RWPE1 (cell line): ENCODE measurements at regions of chr11 and their contacts with region 1.

Region 1: GRCh38 chr11:2420502-2421225 is 20.1 kb downstream of the TSSC4 start:
- DNase-seq: peak; percentile 72
- H3K27ac ChIP-seq: no peak overlapping the region
- CTCF ChIP-seq: peak; percentile 89

Region 2: DNA sequence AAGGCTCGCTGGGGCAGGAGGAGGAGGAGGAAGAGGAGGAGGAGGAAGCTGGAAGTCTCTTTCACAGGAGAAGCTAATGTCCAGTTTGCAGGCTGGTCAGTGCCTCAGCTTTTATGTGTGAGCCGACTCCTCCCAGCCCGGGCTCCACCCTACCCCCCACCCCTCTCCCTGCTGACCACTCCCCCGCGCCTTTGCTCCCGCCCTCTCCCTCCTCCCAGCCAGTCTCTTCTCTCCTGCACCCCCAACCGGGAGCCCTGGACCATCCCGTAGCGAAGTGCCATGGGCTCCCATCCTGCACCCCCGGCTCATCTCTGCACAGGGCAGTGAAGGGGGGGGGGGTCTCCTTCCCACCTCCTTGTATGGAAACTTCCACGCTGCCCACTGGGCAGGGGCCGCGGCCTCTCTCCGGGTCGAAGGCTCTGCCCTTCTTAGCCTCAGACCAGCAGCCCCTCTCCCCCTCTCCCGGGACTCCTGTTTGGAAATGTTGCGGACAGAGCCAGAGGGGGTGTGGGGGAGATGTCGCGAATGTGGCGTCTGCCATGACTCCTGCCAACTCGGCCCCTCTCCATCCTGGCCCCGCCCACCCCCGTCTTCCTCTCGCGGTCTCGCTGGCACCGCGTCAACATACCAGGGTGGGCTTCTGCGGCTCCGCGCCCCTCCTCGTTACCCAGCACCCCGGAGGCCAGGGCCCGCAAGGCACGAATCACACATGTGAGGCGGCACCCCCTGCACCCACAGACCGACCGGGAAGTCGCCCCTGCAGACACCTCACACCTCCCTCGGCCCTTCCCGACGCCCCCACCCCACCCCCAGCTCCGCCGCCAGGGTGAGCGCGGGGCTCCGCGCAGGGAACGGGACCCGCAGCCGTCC is 283.2 kb before region 1 on chr11:
- CTCF ChIA-PET with region 1: no interaction called
- POLR2A ChIA-PET with region 1: no interaction called
- DNase-seq: peak; percentile 81
- H3K27ac ChIP-seq: no peak overlapping the region
- CTCF ChIP-seq: no peak

Region 3: GRCh38 chr11:2196970-2197770 is 223.5 kb before region 1 on chr11:
- CTCF ChIA-PET with region 1: interaction called, 10 read pairs
- POLR2A ChIA-PET with region 1: no interaction called
- DNase-seq: peak; percentile 80
- H3K27ac ChIP-seq: no peak overlapping the region
- CTCF ChIP-seq: peak; percentile 93

Region 4: DNA sequence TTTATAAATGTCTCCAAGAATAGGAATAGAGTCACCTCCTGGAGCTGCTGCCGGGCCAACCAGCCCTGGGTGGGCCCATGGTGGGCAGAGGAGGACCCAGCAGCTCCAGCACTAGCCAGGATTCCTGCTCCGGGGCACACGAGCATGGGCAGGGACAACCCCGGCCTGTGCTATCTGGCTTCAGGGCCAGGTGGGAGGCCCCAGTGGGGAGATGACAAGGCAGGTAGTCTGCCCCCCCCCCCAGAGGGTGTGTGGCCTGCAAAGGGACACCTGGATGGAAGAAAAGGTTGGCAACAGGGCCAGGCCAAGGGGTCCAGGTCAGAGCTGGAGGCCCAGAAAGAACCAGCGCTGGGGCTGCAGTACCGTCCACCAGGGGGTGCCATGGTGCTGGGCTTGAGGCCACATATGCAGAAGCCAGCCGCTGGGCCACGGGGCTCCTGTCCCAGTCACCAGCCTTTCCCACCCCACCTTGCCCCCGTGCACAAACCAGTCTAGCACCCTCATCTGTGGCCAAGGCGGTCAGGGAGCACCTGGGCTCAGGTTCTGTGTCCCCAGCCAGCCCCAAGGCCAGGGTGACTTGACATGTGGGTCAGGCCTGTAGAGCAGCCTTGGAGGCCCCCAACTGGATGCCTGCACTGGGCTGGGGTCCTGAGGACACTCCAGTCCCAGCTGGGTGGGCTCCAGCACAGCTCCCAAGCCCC is 115.4 kb before region 1 on chr11:
- CTCF ChIA-PET with region 1: interaction called, 161 read pairs
- POLR2A ChIA-PET with region 1: no interaction called
- DNase-seq: peak; percentile 53
- H3K27ac ChIP-seq: peak overlapping the region; percentile 81
- CTCF ChIP-seq: peak; percentile 77

Region 5: DNA sequence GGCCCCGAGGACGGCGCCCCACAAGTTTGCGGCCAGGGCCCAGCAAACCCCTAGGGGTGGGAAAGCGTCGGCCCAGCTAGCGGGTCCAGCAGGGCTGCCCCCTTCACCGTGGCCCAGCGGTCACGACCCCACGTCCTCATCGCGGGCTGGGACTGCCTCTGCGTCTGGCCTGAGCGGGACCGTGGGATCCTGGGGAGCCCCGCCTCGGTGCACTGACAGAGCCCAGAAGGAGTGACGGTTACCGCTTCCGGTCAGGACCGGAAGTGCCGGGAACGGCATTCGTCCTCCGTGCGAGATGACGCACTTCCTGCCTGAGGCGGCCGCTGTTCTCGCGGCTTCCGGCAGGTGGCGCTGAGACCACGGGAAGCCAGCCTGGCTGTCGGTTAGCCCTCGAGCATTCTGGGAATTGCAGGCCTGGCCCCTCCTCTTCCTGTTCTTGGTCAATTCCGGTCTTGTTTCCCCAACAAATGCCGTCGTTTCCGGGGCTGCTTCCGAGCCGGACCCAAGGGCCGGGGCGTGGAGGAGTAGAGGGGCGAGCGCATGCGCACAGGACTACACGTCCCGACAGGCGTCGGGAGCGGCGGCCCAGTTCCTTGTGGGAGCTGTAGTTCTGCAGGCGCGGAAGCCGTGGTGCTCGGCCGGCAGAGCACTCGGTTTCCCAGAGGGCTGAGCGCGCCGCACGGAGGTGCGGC is 20.4 kb before region 1 on chr11 and contains the start of gene TSSC4:
- CTCF ChIA-PET with region 1: interaction called, 50 read pairs
- POLR2A ChIA-PET with region 1: no interaction called
- DNase-seq: peak; percentile 98
- H3K27ac ChIP-seq: peak within 1 kb of the TSS; percentile 94
- CTCF ChIP-seq: peak; percentile 98

Region 6: DNA sequence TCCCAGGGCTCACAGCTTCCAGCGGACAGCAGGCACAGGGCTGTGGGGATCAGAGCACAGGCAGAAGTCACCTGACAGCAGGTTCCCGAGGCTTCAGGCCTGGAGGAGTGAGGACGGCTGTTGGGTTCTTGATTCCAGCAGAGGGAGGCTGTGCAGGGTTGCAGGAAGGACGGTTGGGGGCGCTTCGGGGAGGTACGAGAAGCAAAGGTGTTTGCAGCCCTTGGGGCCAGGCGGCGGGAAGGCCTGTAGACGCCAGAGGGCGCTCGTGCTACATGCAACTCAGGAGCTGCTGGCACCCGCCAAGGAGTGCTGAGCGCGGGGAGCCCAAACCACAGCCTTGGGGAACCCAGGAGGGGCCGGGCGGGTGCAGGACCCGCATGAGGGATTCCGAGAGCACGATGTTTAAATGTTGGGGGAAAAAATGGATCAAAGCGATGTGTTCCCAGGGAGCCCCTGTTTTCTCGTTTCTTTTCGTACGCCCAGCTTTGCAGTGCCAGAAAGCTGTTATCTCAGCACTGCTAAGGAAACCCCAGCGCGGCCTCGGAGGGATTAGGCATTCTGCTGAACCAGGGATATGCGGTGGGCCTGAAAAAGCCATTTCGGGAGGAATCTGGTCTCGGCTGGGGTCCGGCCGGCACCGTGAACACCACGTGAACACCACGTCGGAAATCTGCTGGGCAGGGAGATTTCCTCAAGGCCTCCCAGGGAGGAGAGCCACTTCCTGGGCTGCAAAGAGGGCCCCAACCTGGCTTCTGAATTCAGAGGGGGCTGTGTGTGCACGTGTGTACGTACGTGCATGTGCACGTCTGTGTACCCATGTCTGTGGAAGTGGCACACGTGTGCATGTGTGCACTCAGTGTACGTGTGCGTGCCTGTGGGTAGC is 112.3 kb after region 1 on chr11:
- CTCF ChIA-PET with region 1: interaction called, 41 read pairs
- POLR2A ChIA-PET with region 1: no interaction called
- DNase-seq: peak; percentile 74
- H3K27ac ChIP-seq: peak overlapping the region; percentile 78
- CTCF ChIP-seq: peak; percentile 98